ENCODE measurements at regions of chr7 and their contacts with region 1.

Region 1: DNA sequence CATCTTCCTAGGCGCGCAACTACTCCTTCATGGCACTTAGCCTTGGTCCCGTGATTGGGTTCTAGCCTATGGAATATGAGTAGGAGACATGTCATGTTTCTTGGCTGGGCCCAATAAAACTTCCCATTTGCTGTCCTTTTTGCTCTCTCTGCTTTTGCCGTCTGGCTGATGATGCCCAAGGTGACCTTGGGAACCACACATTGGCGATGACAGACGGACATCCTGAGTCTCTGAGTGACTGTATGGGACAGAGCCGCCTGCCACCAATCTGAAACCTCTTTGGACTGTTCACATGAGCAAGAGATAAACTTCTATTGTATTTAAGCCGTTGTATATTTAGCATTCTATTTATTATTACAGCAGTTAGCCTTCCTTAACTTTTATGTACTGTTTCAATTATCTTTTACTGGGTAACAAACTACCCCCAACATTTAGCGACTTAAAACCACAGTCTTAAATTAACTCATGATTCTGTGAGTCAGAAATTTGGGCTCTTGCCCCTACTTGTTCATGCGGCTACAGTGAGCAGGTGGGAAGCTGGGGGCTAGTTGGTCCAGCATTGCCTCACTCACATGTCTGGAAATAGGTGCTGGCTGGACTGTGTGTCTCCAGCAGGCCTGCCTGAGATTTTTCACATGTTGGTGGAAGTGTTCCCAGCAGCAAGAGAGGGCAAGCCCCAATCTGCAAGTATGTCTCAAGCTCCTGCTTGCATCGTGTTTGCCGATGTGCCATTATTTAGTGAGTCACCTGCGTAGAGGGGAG is 71.7 kb downstream of the NOD1 start:
- DNase-seq: no peak
- H3K4me3 Mint-ChIP-seq: no peak overlapping the region
- H3K27ac Mint-ChIP-seq: no peak overlapping the region
- H3K4me1 Mint-ChIP-seq: no peaks in the 10 kb centered on the region
- H3K27me3 Mint-ChIP-seq: no peaks in the 10 kb centered on the region
- CTCF ChIP-seq: no peak

Region 2: DNA sequence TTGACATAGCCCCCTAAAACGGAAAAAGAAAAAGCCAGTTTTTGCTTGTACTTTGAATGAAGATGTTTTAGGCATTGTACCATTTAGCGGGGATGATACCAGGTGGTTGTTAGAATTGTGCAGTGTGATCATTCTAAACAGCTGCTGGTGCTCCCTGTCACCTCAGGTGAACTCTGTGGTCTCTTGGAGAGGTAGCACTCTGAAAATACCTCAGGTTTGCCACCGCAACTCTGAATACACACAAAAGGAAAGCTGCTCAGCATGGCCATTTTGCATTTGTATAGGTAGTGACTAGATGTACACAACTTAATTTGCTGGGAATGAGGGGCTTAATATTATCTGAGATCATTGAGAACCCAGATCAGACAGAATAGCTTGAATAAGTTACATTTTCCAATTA is 326.0 kb before region 1 on chr7:
- CTCF ChIA-PET with region 1: no interaction called
- intact Hi-C with region 1: loop called (anchors 10 kb)
- DNase-seq: no peak
- H3K4me3 Mint-ChIP-seq: no peak overlapping the region
- H3K27ac Mint-ChIP-seq: no peak overlapping the region
- H3K4me1 Mint-ChIP-seq: no peaks in the 10 kb centered on the region
- H3K27me3 Mint-ChIP-seq: no peaks in the 10 kb centered on the region
- CTCF ChIP-seq: no peak

Region 3: DNA sequence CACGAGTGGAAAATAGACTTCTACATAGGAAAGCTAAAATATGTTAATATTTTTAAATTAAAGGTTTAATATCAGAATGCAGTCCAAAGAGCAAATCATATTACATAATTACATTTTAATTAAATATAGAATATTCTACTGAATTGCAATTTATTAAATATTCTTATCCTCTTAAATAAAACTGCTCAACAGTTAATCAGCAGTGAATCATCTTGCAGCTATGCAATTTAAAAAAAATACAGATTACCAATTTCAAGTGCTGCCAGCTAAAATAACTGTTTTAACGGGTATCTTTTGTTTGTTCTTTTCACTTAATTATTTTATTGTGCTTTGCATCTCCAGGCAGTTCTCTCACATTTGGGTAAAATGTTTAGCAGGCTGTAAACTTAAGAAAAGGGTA is 40.2 kb before region 1 on chr7:
- CTCF ChIA-PET with region 1: no interaction called
- intact Hi-C with region 1: loop called (anchors 5 kb)
- DNase-seq: no peak
- H3K4me3 Mint-ChIP-seq: no peak overlapping the region
- H3K27ac Mint-ChIP-seq: no peak overlapping the region
- H3K4me1 Mint-ChIP-seq: no peaks in the 10 kb centered on the region
- H3K27me3 Mint-ChIP-seq: no peaks in the 10 kb centered on the region
- CTCF ChIP-seq: no peak

Measured in Calu3 (cell line).